Activated CD8-positive, alpha-beta memory T cell treated with anti-CD3 and anti-CD28 coated beads, Interleukin-2, amount 10 ng/mL, durations not matched to agents 7 days and 5 days (primary cell): ENCODE measurements at regions of chr11 and their contacts with region 1.

Region 1: DNA sequence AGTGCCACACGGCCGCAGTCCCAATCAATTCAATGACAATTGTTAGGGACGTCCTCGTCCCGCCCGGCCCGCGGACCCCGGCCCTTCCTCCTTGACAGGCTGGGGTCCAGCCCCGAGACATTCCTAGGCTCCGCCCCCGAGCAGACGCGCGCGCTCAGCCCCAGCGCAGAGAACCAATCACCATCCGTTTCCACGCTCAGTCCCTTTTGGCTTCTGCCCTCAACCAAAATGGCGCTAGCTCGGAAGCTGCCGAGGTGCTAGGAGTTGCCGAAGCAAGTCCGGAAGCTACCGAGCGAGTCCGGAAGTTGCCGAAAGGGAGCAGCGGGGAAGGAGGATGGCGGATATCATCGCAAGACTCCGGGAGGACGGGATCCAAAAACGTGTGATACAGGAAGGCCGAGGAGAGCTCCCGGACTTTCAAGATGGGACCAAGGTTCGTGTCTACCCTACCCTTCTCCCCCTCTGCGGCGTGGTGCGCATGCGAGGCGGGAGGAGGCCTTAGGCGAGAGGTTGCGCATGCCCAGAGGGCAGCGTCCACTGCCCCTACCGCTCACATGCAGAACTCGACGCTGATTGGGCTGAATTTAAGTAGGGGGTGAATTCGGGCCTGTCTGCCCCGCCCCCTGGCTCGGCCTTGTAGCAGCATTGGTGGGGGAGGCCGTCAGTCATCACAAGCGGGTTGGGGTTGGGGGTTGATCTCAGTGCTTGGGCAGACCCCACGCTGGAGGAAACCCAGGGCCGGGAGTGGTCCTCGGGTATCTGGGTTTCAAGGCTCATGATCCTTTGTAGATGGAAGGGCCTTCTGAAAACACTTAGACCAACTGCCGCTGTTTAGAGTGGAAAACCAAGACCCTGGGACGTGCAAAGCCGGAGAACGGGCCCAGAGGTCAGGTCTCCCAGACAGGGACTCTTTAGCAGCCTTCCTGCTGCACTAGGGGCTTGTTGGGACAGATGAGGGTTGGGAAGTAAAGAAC is at the start of gene AIP:
- DNase-seq: peak; percentile 99
- ATAC-seq: peak; percentile 81
- H3K4me3 Mint-ChIP-seq: peak within 1 kb of the TSS; percentile 80
- H3K27ac Mint-ChIP-seq: peak within 1 kb of the TSS; percentile 99
- H3K4me1 Mint-ChIP-seq: peaks cover 54% of the 10 kb centered on the region
- H3K27me3 Mint-ChIP-seq: peaks cover 4% of the 10 kb centered on the region
- total RNA-seq, gene AIP: 168 to 178 TPM

Region 2: DNA sequence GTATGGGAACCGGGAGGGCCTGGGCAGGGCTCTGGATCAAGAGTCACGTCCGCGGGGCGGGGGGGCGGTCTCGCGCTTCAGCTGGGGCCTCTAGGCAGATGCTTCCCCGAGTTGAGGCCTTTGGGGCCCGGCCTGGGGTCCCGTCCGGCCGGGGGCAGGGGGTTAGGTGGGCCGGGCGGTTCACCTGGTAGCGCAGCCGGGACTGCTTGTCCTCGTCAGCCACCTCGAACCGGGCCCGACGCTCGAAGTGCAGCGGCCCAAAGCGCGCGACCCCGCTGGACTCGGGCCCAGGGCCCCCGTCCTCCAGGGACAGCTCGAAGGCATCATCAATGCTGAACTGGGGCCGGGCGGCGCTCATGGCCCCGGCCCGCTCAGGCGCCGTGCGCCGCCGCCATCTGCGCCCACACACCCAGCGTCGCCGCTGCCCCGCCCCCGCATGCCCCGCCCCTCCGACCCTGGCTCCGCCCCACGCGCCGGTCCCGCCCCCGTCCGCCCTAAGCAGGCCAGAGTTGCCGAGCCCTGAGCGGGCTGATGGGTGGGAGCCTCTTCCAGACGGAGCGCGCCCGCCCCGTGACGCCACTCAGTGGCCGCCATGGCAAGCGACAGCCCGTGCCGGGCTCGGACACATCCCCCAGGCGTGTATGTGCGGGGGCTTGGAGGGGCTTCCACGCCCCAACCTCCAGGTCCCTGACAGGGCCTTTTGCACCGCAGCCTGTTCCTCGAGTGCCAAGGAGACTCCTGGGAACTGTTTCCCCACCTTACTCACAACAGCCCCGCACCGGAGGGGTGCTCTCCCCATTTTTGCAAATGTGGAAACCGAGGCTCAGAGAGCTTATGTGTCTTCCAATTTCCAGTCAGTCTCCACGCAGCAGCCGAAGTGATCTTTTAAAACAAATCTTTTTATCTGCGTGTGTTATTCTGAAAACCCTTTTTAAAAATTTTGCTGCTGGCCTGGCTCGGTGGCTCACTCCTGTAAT is 14.0 kb before region 1 on chr11 and contains the start of gene TMEM134:
- CTCF ChIA-PET with region 1: interaction called, 19 read pairs
- DNase-seq: peak; percentile 95
- ATAC-seq: peak; percentile 86
- H3K4me3 Mint-ChIP-seq: peak within 1 kb of the TSS; percentile 83
- H3K27ac Mint-ChIP-seq: peak within 1 kb of the TSS; percentile 82
- H3K4me1 Mint-ChIP-seq: peaks cover 30% of the 10 kb centered on the region
- H3K27me3 Mint-ChIP-seq: no peaks in the 10 kb centered on the region
- total RNA-seq, gene TMEM134: 32.8 to 41.9 TPM

Region 3: DNA sequence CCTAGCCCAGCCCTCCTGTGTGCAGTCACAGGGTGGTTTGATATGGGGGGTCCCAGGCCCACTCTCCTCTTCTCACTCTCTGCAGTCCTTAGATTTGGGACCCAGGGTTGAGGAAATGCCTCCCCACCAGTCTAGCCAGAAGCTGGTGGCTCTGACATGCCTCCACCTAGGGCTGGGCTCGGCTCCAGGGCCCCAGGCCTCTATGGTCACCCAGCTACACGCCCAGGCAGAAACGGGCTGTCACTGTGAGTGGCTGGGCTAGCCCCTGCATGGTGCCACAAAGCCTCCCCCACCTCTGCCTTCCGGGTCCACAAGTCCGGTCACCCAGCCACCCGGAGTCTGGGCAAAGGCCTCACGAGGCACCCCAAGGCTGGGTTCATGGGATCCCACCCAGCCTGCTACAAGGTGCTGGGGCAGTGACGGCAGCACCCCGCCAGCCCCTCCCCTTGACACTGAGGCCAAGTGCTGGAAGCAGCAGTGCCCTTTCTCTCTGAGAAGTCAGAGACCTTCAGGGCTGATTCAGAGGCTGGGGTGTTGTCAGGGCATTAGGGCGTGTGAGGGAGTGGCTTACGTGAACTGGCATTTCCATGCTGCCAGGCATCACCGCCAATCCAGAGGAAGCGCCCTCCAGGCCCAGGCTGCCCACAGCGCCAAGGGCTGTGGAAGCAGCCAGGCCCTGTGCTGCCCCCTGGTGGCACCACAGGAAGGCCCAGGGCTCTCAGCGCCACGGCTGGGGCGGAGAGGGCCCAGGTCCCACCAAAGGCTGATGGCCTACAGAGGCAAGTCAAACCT is 22.7 kb after region 1 on chr11:
- CTCF ChIA-PET with region 1: interaction called, 13 read pairs
- DNase-seq: peak; percentile 93
- ATAC-seq: peak; percentile 50
- H3K4me3 Mint-ChIP-seq: peak overlapping the region; percentile 92
- H3K27ac Mint-ChIP-seq: peak overlapping the region; percentile 94
- H3K4me1 Mint-ChIP-seq: peaks cover 51% of the 10 kb centered on the region
- H3K27me3 Mint-ChIP-seq: peaks cover 2% of the 10 kb centered on the region